ENCODE measurements at regions of chr1 and their contacts with region 1.

Region 1: GRCh38 chr1:109984456-109985275 is at the start of gene AHCYL1:
- DNase-seq: peak; percentile 100
- H3K4me3 Mint-ChIP-seq: peak within 1 kb of the TSS; percentile 99
- H3K27ac Mint-ChIP-seq: peak within 1 kb of the TSS; percentile 92
- H3K4me1 Mint-ChIP-seq: peaks cover 39% of the 10 kb centered on the region
- H3K27me3 Mint-ChIP-seq: no peaks in the 10 kb centered on the region
- total RNA-seq, gene AHCYL1: 89.6 to 92.3 TPM

Region 2: GRCh38 chr1:109643385-109644230 is 341.1 kb before region 1 on chr1:
- CTCF ChIA-PET with region 1: interaction called, 123 read pairs
- POLR2A ChIA-PET with region 1: no interaction called
- intact Hi-C with region 1: loop called (anchors 1 kb)
- DNase-seq: peak; percentile 93
- H3K4me3 Mint-ChIP-seq: no peak overlapping the region
- H3K27ac Mint-ChIP-seq: no peak overlapping the region
- H3K4me1 Mint-ChIP-seq: peaks cover 3% of the 10 kb centered on the region
- H3K27me3 Mint-ChIP-seq: no peaks in the 10 kb centered on the region

Region 3: DNA sequence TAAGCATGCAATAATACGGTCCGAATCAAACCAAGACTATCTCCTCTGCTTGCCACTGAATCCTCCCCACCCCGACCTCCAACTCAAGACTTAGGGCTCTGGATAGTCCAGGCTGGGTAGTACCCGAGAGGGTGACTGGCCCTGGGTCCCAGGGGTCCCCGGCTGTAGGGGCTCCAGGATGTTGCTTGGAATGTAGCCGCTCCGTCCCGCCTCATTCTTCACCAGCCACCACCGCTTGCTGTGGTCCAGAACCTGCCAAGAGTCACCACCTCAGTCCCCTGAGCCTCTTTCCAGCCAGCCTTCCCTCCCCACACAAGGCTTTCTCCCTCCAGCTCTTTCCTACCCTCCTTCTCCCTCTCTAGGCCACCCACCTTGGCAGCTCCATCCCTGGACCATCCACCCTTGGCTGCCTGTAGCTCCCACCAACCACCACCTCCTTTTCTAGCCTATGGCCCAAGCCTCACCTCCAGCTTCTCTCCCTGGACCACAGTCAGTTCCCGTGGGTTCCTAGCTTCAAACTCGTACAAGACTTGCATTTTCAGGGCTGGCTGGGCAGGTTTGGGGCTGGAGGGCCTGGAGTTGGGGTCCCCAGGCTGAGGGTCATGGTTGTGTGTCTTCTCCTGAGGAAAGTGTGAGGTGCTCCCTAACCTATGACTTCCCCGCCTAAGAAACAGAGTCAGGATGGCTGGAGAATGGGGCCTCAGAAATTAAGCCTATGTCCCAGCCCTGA is 233.0 kb before region 1 on chr1:
- CTCF ChIA-PET with region 1: interaction called, 13 read pairs
- POLR2A ChIA-PET with region 1: no interaction called
- intact Hi-C with region 1: no loop called
- DNase-seq: no peak
- H3K4me3 Mint-ChIP-seq: no peak overlapping the region
- H3K27ac Mint-ChIP-seq: no peak overlapping the region
- H3K4me1 Mint-ChIP-seq: no peaks in the 10 kb centered on the region
- H3K27me3 Mint-ChIP-seq: peaks cover 20% of the 10 kb centered on the region

Region 4: GRCh38 chr1:109802901-109803561 is 181.6 kb before region 1 on chr1:
- CTCF ChIA-PET with region 1: interaction called, 33 read pairs
- POLR2A ChIA-PET with region 1: interaction called, 17 read pairs
- intact Hi-C with region 1: no loop called
- DNase-seq: peak; percentile 45
- H3K4me3 Mint-ChIP-seq: peak overlapping the region; percentile 70
- H3K27ac Mint-ChIP-seq: peak overlapping the region; percentile 99
- H3K4me1 Mint-ChIP-seq: peaks cover 68% of the 10 kb centered on the region
- H3K27me3 Mint-ChIP-seq: no peaks in the 10 kb centered on the region

Region 5: DNA sequence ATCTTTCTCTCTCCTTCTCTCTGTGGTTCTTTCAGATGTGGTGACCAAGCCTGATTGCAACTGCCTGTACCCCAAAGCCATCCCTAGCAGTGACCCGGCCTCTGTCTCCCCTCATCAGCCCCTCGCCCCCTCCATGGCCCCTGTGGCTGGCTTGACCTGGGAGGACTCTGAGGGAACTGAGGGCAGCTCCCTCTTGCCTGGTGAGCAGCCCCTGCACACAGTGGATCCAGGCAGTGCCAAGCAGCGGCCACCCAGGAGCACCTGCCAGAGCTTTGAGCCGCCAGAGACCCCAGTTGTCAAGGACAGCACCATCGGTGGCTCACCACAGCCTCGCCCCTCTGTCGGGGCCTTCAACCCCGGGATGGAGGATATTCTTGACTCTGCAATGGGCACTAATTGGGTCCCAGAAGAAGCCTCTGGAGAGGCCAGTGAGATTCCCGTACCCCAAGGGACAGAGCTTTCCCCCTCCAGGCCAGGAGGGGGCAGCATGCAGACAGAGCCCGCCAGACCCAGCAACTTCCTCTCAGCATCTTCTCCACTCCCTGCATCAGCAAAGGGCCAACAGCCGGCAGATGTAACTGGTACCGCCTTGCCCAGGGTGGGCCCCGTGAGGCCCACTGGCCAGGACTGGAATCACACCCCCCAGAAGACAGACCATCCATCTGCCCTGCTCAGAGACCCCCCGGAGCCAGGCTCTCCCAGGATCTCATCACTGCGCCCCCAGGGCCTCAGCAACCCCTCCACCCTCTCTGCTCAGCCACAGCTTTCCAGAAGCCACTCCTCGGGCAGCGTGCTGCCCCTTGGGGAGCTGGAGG is 61.3 kb before region 1 on chr1:
- CTCF ChIA-PET with region 1: interaction called, 21 read pairs
- POLR2A ChIA-PET with region 1: interaction called, 3 read pairs
- intact Hi-C with region 1: no loop called
- DNase-seq: peak; percentile 39
- H3K4me3 Mint-ChIP-seq: no peak overlapping the region
- H3K27ac Mint-ChIP-seq: peak overlapping the region; percentile 50
- H3K4me1 Mint-ChIP-seq: no peaks in the 10 kb centered on the region
- H3K27me3 Mint-ChIP-seq: no peaks in the 10 kb centered on the region

Region 6: GRCh38 chr1:110019770-110020169 is 35.1 kb after region 1 on chr1:
- CTCF ChIA-PET with region 1: interaction called, 10 read pairs
- POLR2A ChIA-PET with region 1: no interaction called
- intact Hi-C with region 1: no loop called
- DNase-seq: no peak
- H3K4me3 Mint-ChIP-seq: no peak overlapping the region
- H3K27ac Mint-ChIP-seq: no peak overlapping the region
- H3K4me1 Mint-ChIP-seq: no peaks in the 10 kb centered on the region
- H3K27me3 Mint-ChIP-seq: no peaks in the 10 kb centered on the region

Region 7: DNA sequence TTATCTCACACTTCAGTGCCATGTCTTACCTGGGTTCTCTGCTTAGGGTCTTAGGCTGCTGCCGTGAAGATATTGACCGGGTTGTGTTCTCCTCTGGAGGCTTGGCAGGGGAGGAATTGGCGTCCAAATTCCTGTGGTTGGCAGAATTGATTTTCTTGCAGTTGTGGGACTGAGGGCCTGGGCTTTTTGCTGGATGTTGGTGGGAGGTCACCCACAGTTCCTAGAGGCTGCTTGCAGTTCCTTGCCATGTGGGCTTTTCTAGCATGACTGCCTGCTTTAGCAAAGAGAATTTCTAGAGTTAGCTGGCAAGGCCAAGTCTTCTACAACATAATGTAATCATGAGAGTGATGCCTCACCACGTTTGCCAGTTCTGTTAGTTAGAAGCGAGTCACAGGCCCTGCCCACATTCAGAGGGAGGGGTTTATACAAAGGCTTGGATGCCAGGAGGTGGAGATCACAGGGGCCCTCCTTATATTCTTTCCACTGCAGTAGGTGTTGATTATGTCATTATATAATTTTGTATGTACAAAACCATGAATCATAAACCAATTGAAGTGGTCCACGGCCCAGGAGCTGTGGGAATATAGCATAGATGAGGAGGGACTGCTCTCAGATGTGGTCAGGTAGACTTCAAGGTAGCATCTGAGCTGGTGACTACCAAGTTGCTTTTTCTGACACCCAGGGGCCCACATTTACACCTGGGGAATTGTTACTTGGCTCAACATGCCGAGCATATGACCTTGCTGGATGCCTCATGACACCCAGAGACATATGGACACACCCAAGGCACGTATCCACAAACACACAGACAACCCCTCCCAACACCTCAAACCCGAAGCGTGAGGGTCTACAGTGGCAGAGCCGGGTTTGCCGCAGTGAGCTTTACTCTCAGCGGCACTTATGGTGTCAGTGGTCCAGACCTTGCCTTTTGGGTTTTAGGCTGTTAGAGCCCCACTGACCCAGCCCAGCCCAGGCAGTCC is 134.3 kb after region 1 on chr1:
- CTCF ChIA-PET with region 1: no interaction called
- POLR2A ChIA-PET with region 1: no interaction called
- intact Hi-C with region 1: no loop called
- DNase-seq: peak; percentile 39
- H3K4me3 Mint-ChIP-seq: no peak overlapping the region
- H3K27ac Mint-ChIP-seq: no peak overlapping the region
- H3K4me1 Mint-ChIP-seq: peaks cover 4% of the 10 kb centered on the region
- H3K27me3 Mint-ChIP-seq: peaks cover 19% of the 10 kb centered on the region